AG04450 (cell line): ENCODE measurements at regions of chr12 and their contacts with region 1.

Region 1: GRCh38 chr12:124917135-124917840 is 2.8 kb upstream of the UBC start:
- DNase-seq: peak; percentile 99
- H3K4me3 ChIP-seq: peak overlapping the region; percentile 100
- H3K27ac ChIP-seq: peak overlapping the region; percentile 99
- H3K27me3 ChIP-seq: no peaks in the 10 kb centered on the region
- CTCF ChIP-seq: no peak

Region 2: GRCh38 chr12:124829008-124829707 is 88.1 kb before region 1 on chr12:
- CTCF ChIA-PET with region 1: no interaction called
- POLR2A ChIA-PET with region 1: interaction called, 10 read pairs
- DNase-seq: peak; percentile 36
- H3K4me3 ChIP-seq: no peak overlapping the region
- H3K27ac ChIP-seq: peak overlapping the region; percentile 39
- H3K27me3 ChIP-seq: no peaks in the 10 kb centered on the region
- CTCF ChIP-seq: no peak

Region 3: GRCh38 chr12:124927201-124928094 is 10.2 kb after region 1 on chr12:
- CTCF ChIA-PET with region 1: interaction called, 3 read pairs
- POLR2A ChIA-PET with region 1: interaction called, 41 read pairs
- DNase-seq: no peak
- H3K4me3 ChIP-seq: peak overlapping the region; percentile 78
- H3K27ac ChIP-seq: peak overlapping the region; percentile 97
- H3K27me3 ChIP-seq: no peaks in the 10 kb centered on the region
- CTCF ChIP-seq: no peak